GM12878 (cell line): ENCODE measurements at regions of chr10 and their contacts with region 1.

Region 1: GRCh38 chr10:63537536-63537935 is 16.3 kb downstream of the REEP3 start:
- DNase-seq: no peak
- ATAC-seq: no peak
- H3K4me3 ChIP-seq: no peak overlapping the region
- H3K27ac ChIP-seq: no peak overlapping the region
- H3K4me1 ChIP-seq: no peaks in the 10 kb centered on the region
- H3K27me3 ChIP-seq: no peaks in the 10 kb centered on the region
- CTCF ChIP-seq: no peak
- EP300 ChIP-seq: no peak
- POLR2A ChIP-seq: no peak
- RAD21 ChIP-seq: no peak

Region 2: GRCh38 chr10:63430097-63430998 is 107.2 kb before region 1 on chr10:
- CTCF ChIA-PET with region 1: no interaction called
- POLR2A ChIA-PET with region 1: no interaction called
- RAD21 ChIA-PET with region 1: no interaction called
- SMC1A ChIA-PET with region 1: no interaction called
- in situ Hi-C with region 1: no loop called
- intact Hi-C with region 1: no loop called
- DNase-seq: no peak
- ATAC-seq: no peak
- H3K4me3 ChIP-seq: no peak overlapping the region
- H3K27ac ChIP-seq: no peak overlapping the region
- H3K4me1 ChIP-seq: no peaks in the 10 kb centered on the region
- H3K27me3 ChIP-seq: no peaks in the 10 kb centered on the region
- CTCF ChIP-seq: no peak
- EP300 ChIP-seq: no peak
- POLR2A ChIP-seq: no peak
- RAD21 ChIP-seq: no peak

Region 3: DNA sequence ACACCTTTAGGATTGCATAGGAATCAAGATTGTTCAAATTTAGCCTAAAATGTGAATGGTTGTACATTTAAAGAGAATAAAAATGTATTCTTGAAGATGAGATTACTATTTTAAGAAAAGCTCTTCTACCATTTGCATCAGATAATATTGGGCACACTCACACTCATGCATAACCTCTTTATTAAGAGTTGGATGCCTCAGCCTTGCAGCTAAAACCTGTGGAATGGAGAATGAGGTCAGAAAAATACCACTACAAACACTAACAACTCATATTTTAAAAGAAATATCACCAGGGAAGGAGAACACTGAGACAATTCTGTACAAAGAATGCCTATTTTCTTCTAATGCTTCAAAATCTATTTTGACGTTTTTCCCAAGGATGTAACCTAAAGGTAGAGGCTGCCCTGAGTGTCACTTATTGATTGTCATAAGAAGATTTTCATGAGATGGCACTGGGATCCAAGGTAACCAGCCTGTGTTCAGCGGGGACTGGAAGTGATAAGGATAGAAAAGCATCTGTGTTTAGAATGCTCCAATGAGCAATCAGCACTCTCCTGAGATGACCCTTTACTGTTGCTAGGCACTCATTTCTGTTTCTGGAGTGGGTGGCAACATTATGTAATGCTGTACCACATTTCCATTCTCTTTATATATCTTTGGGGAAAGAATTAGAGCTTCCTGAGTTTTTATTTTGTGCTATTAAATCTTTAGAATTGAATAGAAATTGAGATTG is 10.3 kb after region 1 on chr10:
- CTCF ChIA-PET with region 1: no interaction called
- POLR2A ChIA-PET with region 1: interaction called, 3 read pairs
- RAD21 ChIA-PET with region 1: no interaction called
- SMC1A ChIA-PET with region 1: interaction called, 16 read pairs
- in situ Hi-C with region 1: no loop called
- intact Hi-C with region 1: no loop called
- DNase-seq: no peak
- ATAC-seq: no peak; the same call in 2 of the 3 replicates
- H3K4me3 ChIP-seq: no peak overlapping the region
- H3K27ac ChIP-seq: no peak overlapping the region
- H3K4me1 ChIP-seq: no peaks in the 10 kb centered on the region
- H3K27me3 ChIP-seq: no peaks in the 10 kb centered on the region
- CTCF ChIP-seq: no peak
- EP300 ChIP-seq: no peak
- POLR2A ChIP-seq: no peak
- RAD21 ChIP-seq: no peak

Region 4: GRCh38 chr10:63935705-63936104 is 398.2 kb after region 1 on chr10:
- CTCF ChIA-PET with region 1: no interaction called
- POLR2A ChIA-PET with region 1: no interaction called
- RAD21 ChIA-PET with region 1: no interaction called
- SMC1A ChIA-PET with region 1: no interaction called
- in situ Hi-C with region 1: no loop called
- intact Hi-C with region 1: no loop called
- DNase-seq: no peak
- ATAC-seq: peak; percentile 60; the same call in 2 of the 3 replicates
- H3K4me3 ChIP-seq: no peak overlapping the region
- H3K27ac ChIP-seq: no peak overlapping the region
- H3K4me1 ChIP-seq: no peaks in the 10 kb centered on the region
- H3K27me3 ChIP-seq: peaks cover 0 to 2% of the 10 kb centered on the region in 2 experiments; a peak in 1 of 4 replicates
- CTCF ChIP-seq: peak in 1 of 3 experiments; percentile 24; a peak in 1 of 6 replicates
- EP300 ChIP-seq: no peak
- POLR2A ChIP-seq: no peak
- RAD21 ChIP-seq: 0 out of 2 replicates have a peak, but pooled peaks have one; percentile 4